ENCODE measurements at regions of chr6 and their contacts with region 1.

Region 1: DNA sequence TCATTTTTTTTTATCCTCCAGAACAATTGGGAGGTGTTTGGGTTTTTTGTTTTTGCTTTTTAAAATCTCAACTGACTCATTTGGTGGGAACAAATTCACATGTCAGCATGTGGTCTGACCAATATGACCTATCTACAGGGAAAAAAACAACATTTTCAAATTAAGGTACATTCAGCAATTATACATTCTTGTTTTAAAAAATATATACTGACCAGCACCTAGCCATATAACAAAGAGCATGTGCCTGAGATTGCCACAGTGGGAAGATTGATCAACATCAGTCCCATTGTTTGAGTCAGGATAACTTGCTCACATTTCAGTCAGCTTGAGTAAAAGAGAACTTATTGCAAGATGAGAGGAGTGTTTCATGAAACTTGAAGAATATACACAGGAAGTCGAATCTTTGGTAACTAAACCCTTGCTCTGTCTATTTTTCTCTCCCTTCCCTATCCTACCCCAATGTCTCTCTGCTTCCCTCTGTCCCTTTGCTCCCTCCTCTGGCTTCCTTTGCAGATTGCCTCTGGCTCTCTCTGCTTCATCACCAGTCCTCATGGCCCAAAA is 163.2 kb upstream of the TAB2 start:
- DNase-seq: no peak
- H3K4me3 Mint-ChIP-seq: peak overlapping the region; percentile 21
- H3K27ac Mint-ChIP-seq: peak overlapping the region; percentile 99
- H3K4me1 Mint-ChIP-seq: peaks cover 84% of the 10 kb centered on the region
- H3K27me3 Mint-ChIP-seq: no peaks in the 10 kb centered on the region

Region 2: DNA sequence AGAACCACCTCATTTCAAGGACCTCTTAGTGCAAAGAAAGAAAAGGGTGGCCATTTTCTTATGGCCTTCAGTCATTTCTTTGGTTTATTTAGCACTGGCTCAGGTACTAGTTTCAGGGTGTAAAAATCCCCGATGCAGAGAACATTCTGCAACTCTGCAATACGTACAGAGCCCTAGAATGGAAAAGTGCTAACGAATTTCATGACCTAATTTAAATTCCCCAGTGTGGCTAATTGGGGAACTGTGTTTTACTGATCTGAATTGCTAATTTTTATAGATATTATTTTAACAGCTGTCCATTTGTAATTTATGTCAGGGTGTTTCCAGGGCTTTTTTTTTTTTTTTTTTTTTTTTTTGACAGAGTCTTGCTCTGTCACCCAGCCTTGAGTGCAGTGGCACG is 246.8 kb before region 1 on chr6:
- intact Hi-C with region 1: no loop called
- DNase-seq: no peak
- H3K4me3 Mint-ChIP-seq: no peak overlapping the region
- H3K27ac Mint-ChIP-seq: no peak overlapping the region
- H3K4me1 Mint-ChIP-seq: no peaks in the 10 kb centered on the region
- H3K27me3 Mint-ChIP-seq: peaks cover 13% of the 10 kb centered on the region

Region 3: GRCh38 chr6:148972481-148972880 is 181.9 kb before region 1 on chr6:
- intact Hi-C with region 1: no loop called
- DNase-seq: no peak
- H3K4me3 Mint-ChIP-seq: no peak overlapping the region
- H3K27ac Mint-ChIP-seq: no peak overlapping the region
- H3K4me1 Mint-ChIP-seq: no peaks in the 10 kb centered on the region
- H3K27me3 Mint-ChIP-seq: peaks cover 48% of the 10 kb centered on the region

Region 4: GRCh38 chr6:149082286-149082707 is 72.0 kb before region 1 on chr6:
- intact Hi-C with region 1: no loop called
- DNase-seq: peak; percentile 81
- H3K4me3 Mint-ChIP-seq: peak overlapping the region; percentile 80
- H3K27ac Mint-ChIP-seq: peak overlapping the region; percentile 92
- H3K4me1 Mint-ChIP-seq: peaks cover 89% of the 10 kb centered on the region
- H3K27me3 Mint-ChIP-seq: no peaks in the 10 kb centered on the region

Region 5: GRCh38 chr6:149122850-149123821 is 31.2 kb before region 1 on chr6:
- intact Hi-C with region 1: loop called (anchors 1 kb)
- DNase-seq: no peak
- H3K4me3 Mint-ChIP-seq: peak overlapping the region; percentile 48
- H3K27ac Mint-ChIP-seq: peak overlapping the region; percentile 82
- H3K4me1 Mint-ChIP-seq: peaks cover 52% of the 10 kb centered on the region
- H3K27me3 Mint-ChIP-seq: no peaks in the 10 kb centered on the region

Region 6: GRCh38 chr6:149170564-149171452 is 16.5 kb after region 1 on chr6:
- intact Hi-C with region 1: loop called (anchors 2 kb)
- DNase-seq: no peak
- H3K4me3 Mint-ChIP-seq: no peak overlapping the region
- H3K27ac Mint-ChIP-seq: peak overlapping the region; percentile 24
- H3K4me1 Mint-ChIP-seq: peaks cover 73% of the 10 kb centered on the region
- H3K27me3 Mint-ChIP-seq: no peaks in the 10 kb centered on the region

Region 7: GRCh38 chr6:149271348-149272340 is 117.3 kb after region 1 on chr6:
- intact Hi-C with region 1: loop called (anchors 1 kb)
- DNase-seq: no peak
- H3K4me3 Mint-ChIP-seq: peak overlapping the region; percentile 62
- H3K27ac Mint-ChIP-seq: peak overlapping the region; percentile 94
- H3K4me1 Mint-ChIP-seq: peaks cover 56% of the 10 kb centered on the region
- H3K27me3 Mint-ChIP-seq: no peaks in the 10 kb centered on the region